Psoas muscle (tissue), 8 donors: ENCODE measurements at regions of chr1 and their contacts with region 1.

Region 1: DNA sequence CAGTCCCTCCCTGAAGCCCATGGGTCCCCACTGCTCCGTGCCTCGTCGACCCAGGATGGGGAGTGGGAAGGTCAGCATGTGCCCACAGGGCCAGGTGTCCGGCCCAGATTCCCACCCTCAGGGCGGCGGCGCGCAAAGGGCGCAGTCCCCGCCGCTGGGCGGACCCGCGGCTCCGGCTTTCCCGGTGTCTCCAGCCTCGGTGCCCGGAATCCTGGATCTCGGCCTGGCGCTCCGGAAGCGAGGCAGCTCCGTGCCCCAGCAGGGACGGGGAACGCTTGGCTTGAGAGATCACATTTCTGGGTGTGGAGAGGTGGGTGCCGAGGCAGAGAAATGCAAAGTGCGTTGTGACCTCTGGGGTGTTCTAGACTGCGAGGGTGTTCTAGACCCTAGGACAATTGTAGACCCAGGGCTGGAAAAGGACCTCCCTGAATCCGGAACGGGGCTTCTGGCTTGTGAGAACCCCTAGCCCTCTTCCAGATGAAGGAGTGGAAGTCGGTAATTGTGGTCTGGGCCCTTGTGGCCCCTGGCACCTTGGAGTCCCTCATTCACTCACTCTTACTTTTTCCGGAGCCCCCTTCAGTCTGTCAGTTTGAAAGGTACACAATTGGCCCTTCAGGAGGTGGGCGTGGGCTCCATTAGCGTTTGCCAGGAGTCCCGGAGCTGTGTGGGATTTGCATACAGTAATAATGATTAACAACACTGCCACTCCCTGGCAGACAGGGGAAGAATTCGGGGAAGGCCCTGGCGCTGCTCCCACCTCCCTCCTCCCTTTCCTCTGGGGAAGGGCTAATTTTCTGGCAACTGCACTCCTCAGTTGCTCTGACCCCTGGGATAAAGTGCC is 1.6 kb upstream of the KCND3 start:
- DNase-seq: peak; percentile 66 to 87
- ATAC-seq: peak; percentile 72 to 82 (median 75)
- H3K4me3 ChIP-seq: peak overlapping the region; percentile 79
- H3K27ac ChIP-seq: peak overlapping the region; percentile 72
- H3K4me1 ChIP-seq: peaks cover 31% of the 10 kb centered on the region
- H3K27me3 ChIP-seq: peaks cover 0 to 2% (median 0%) of the 10 kb centered on the region in 3 donors
- CTCF ChIP-seq: peak; percentile 46

Region 2: GRCh38 chr1:111801071-111801841 is 189.8 kb before region 1 on chr1:
- intact Hi-C with region 1: loop called in 1 of 2 experiments (anchors 5 kb)
- DNase-seq: no peak
- ATAC-seq: peak; percentile 74 to 94 (median 89)
- H3K4me3 ChIP-seq: no peak overlapping the region
- H3K27ac ChIP-seq: no peak overlapping the region
- H3K4me1 ChIP-seq: peaks cover 7% of the 10 kb centered on the region
- H3K27me3 ChIP-seq: no peaks in the 10 kb centered on the region
- CTCF ChIP-seq: peak; percentile 18

Region 3: GRCh38 chr1:111813521-111814304 is 177.4 kb before region 1 on chr1:
- intact Hi-C with region 1: loop called in 1 of 2 experiments (anchors 10 kb)
- DNase-seq: no peak
- ATAC-seq: no peak
- H3K4me3 ChIP-seq: no peak overlapping the region
- H3K27ac ChIP-seq: no peak overlapping the region
- H3K4me1 ChIP-seq: no peaks in the 10 kb centered on the region
- H3K27me3 ChIP-seq: no peaks in the 10 kb centered on the region
- CTCF ChIP-seq: no peak

Region 4: DNA sequence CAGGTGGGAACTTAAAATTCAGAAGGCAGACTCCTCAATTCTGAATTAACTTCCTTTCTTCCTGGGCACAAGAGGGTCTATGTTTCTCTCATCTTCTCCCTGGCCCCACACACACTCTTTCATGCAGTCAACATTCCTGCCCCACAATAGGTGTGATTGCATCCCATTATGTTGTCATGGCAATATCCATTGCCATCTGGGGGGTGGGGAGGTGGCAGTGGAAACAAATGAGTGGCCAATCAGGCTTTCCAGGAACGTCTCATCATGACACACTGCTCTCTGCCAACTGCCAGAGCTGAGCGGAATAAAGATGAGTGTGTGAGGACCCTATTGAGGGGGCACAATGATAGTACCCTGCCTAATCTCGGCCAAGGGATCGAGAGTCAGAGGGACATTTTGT is 82.1 kb before region 1 on chr1:
- intact Hi-C with region 1: loop called in 1 of 2 experiments (anchors 2 kb)
- DNase-seq: no peak
- ATAC-seq: no peak
- H3K4me3 ChIP-seq: no peak overlapping the region
- H3K27ac ChIP-seq: no peak overlapping the region
- H3K4me1 ChIP-seq: peaks cover 32% of the 10 kb centered on the region
- H3K27me3 ChIP-seq: no peaks in the 10 kb centered on the region
- CTCF ChIP-seq: no peak

Region 5: DNA sequence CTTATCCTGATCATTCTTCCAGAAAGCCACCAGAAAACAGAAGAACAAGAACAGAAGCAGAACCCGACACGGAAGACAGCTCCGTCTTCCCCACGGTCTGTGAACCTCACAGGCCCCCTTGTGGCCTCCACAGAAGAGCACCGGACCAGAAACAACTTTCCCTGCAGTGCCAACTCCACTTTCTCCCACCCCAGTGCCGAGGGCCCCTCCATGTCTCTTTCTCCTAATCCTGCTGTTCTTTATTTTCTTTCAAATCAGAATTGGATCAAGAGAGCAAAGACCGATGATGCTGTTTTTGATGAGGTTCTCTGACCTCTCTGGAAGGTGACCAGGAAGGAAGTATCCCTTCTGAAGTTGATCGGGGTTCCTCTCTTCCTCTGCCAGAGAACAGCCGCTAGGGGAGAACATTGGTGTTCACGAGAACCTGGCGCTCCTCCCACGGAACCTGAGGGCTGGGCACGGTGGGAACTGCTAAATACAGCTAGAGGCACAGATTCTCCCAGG is 346.0 kb after region 1 on chr1:
- intact Hi-C with region 1: loop called in 1 of 2 experiments (anchors 10 kb)
- DNase-seq: peak; percentile 51 to 59
- ATAC-seq: peak; percentile 42 to 72 (median 68)
- H3K4me3 ChIP-seq: no peak overlapping the region
- H3K27ac ChIP-seq: no peak overlapping the region
- H3K4me1 ChIP-seq: no peaks in the 10 kb centered on the region
- H3K27me3 ChIP-seq: peaks cover 0 to 8% (median 0%) of the 10 kb centered on the region in 3 donors
- CTCF ChIP-seq: peak; percentile 49

Region 6: GRCh38 chr1:113058941-113059706 is 1068.0 kb after region 1 on chr1:
- intact Hi-C with region 1: no loop called
- DNase-seq: no peak
- ATAC-seq: no peak
- H3K4me3 ChIP-seq: no peak overlapping the region
- H3K27ac ChIP-seq: no peak overlapping the region
- H3K4me1 ChIP-seq: no peaks in the 10 kb centered on the region
- H3K27me3 ChIP-seq: no peaks in the 10 kb centered on the region
- CTCF ChIP-seq: no peak